GM10248 (cell line): ENCODE measurements at regions of chr1 and their contacts with region 1.

Region 1: DNA sequence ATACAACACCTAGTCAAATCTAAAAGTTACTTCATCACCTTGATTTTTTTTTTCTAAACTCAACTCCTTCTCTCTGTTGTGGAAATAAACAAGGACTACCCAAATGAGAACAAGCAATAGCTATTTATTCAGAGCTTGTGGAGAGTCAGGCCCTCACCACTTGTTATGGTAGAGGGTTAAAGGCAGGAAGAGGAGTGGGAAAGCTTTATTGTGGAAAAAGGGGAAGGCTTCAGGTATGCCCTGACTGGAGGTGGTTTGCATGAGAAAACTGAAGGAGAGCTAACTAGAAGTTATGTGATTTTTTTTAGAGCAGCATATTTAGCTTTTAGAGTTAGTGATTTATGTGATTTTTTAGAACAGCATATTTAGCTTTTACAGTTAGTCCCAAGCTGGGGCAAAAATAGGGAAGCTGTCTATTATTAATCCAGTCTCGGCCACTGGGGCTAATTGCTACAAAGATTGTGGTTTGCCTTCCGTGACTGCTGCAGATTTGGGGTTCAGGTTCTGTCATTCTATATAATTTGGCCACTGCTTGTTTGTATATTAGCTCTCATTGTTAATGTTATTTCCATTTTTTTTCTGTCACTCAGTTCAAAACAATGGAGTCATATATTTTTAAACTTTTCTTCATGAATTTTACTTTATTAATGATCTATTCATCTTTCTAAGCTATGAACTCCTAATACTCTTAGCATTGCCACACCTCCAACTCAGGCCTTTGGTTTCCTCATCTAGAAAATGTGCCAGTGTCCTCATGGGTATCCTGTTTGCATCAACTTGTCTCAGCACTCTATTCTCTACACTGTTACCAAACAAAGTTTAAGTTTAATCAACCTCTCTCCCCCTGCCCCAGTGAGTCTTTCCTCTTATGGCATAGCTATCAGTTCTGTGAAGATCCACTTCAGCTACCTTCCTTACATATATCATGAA is 713.0 kb downstream of the BRINP3 start:
- DNase-seq: no peak
- CTCF ChIP-seq: no peak

Region 2: GRCh38 chr1:189740777-189741176 is 23.9 kb before region 1 on chr1:
- CTCF ChIA-PET with region 1: interaction called, 10 read pairs
- POLR2A ChIA-PET with region 1: no interaction called
- DNase-seq: no peak
- CTCF ChIP-seq: no peak